ENCODE measurements at regions of chr6 and their contacts with region 1.

Region 1: GRCh38 chr6:157981395-157982296 is at the start of gene SYNJ2:
- DNase-seq: peak; percentile 89
- H3K4me3 Mint-ChIP-seq: peak within 1 kb of the TSS; percentile 89
- H3K27ac Mint-ChIP-seq: peak within 1 kb of the TSS; percentile 74
- H3K4me1 Mint-ChIP-seq: peaks cover 36% of the 10 kb centered on the region
- H3K27me3 Mint-ChIP-seq: no peaks in the 10 kb centered on the region
- total RNA-seq, gene SYNJ2: 32.2 to 32.3 TPM

Region 2: GRCh38 chr6:157823001-157823527 is 158.6 kb before region 1 on chr6 and contains the start of gene SNX9:
- CTCF ChIA-PET with region 1: no interaction called
- POLR2A ChIA-PET with region 1: no interaction called
- intact Hi-C with region 1: loop called (anchors 5 kb)
- DNase-seq: peak; percentile 81
- H3K4me3 Mint-ChIP-seq: peak within 1 kb of the TSS; percentile 96
- H3K27ac Mint-ChIP-seq: peak within 1 kb of the TSS; percentile 99
- H3K4me1 Mint-ChIP-seq: peaks cover 38% of the 10 kb centered on the region
- H3K27me3 Mint-ChIP-seq: no peaks in the 10 kb centered on the region
- total RNA-seq, gene SNX9: 59.3 to 59.7 TPM

Region 3: GRCh38 chr6:157885211-157885788 is 96.3 kb before region 1 on chr6:
- CTCF ChIA-PET with region 1: no interaction called
- POLR2A ChIA-PET with region 1: no interaction called
- intact Hi-C with region 1: loop called (anchors 5 kb)
- DNase-seq: peak; percentile 75
- H3K4me3 Mint-ChIP-seq: no peak overlapping the region
- H3K27ac Mint-ChIP-seq: peak overlapping the region; percentile 94
- H3K4me1 Mint-ChIP-seq: peaks cover 68% of the 10 kb centered on the region
- H3K27me3 Mint-ChIP-seq: no peaks in the 10 kb centered on the region

Region 4: GRCh38 chr6:157962601-157963302 is 18.9 kb before region 1 on chr6:
- CTCF ChIA-PET with region 1: no interaction called
- POLR2A ChIA-PET with region 1: interaction called, 3 read pairs
- intact Hi-C with region 1: loop called (anchors 1 kb)
- DNase-seq: peak; percentile 51
- H3K4me3 Mint-ChIP-seq: peak overlapping the region; percentile 46
- H3K27ac Mint-ChIP-seq: peak overlapping the region; percentile 74
- H3K4me1 Mint-ChIP-seq: peaks cover 18% of the 10 kb centered on the region
- H3K27me3 Mint-ChIP-seq: no peaks in the 10 kb centered on the region

Region 5: DNA sequence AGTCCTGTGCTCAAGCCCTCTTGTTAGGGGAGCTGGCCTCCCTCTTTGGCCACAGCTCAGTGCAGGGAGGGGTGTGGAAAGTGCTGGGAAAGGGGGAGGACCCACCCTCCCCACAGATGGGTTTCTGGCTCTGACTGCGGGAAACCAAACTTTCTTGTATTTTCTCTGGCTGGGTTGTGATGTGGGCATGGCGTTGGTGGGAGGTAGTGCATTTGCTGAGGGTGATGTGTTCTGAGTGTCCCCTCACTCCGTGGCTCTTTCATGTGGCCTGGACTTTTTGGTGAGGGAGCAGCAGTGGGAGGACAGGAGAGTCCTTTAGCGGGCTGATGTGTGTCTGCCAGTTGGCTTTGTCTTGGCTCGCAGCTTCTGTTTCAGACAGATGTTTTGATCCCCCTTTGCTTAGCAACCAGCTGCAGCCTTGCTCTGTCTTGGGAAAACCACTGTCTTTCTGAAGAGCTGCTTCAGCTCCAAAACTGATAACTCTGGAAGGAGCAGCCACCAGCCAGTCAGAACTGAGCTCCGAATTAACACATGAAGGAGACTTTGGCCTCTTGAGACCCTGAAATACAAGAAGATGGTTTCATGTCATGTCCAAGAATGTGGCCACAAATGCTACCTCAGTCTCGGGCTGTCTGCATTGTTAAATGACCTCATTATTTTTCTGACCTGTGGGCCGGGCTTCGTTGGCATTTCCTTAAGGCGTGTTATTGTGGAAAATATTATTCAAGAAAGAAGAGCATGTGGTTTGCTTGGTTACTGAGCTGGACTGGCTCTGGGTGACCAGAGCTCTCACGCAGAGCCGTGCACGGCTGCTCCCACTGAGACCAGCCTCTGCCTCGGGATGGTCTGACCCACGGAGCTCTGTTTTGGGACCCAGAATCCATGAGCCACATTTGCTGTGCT is 21.6 kb after region 1 on chr6:
- CTCF ChIA-PET with region 1: interaction called, 3 read pairs
- POLR2A ChIA-PET with region 1: no interaction called
- intact Hi-C with region 1: loop called (anchors 2 kb)
- DNase-seq: peak; percentile 80
- H3K4me3 Mint-ChIP-seq: no peak overlapping the region
- H3K27ac Mint-ChIP-seq: peak overlapping the region; percentile 44
- H3K4me1 Mint-ChIP-seq: peaks cover 44% of the 10 kb centered on the region
- H3K27me3 Mint-ChIP-seq: no peaks in the 10 kb centered on the region

Region 6: GRCh38 chr6:158040051-158040803 is 58.6 kb after region 1 on chr6:
- CTCF ChIA-PET with region 1: no interaction called
- POLR2A ChIA-PET with region 1: no interaction called
- intact Hi-C with region 1: no loop called
- DNase-seq: peak; percentile 54
- H3K4me3 Mint-ChIP-seq: no peak overlapping the region
- H3K27ac Mint-ChIP-seq: peak overlapping the region; percentile 44
- H3K4me1 Mint-ChIP-seq: peaks cover 25% of the 10 kb centered on the region
- H3K27me3 Mint-ChIP-seq: no peaks in the 10 kb centered on the region

Region 7: DNA sequence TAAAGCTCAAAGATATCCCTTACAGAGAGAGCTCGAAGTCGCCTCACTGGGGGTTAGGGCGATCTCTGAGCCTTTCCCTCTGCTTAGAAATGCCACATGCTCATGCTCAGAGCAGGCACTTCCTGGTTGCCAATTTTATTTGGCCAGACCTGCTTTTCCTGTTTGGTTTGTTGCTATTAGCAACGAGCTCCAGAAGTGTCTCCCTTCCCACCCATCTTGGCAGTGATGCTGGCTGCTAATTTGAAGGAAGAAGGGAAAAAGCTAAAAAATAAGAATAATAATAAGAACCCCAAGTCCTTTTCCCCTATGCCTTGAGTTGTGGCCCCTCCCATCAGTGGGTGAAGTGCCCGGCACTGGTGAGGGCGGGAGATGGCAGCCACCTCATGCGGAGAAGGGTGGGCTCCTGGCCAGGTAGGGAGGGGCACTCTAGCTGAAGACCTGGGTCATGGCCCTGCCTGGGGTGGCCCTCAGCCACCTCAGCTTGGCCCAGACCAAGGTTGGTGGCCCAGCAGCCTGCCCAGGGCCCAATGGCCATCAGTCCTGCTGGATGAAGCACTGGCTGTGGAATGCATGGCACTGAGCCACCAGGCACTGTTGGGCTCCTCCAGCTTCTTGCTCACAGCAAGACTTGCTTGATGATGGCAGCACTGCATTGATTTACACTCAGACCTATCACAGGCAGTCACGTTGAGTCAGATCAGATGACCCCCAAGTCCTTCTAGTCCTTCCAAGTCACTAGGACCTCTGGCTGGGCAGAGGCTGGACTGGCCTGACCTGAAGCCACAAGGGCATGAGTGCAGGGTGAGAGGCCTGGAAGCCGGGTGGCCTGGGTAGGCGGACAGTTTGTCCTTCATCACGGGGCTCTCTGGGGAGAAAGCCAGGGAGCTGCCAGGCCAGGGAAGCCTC is 79.1 kb after region 1 on chr6:
- CTCF ChIA-PET with region 1: no interaction called
- POLR2A ChIA-PET with region 1: no interaction called
- intact Hi-C with region 1: loop called (anchors 5 kb)
- DNase-seq: no peak
- H3K4me3 Mint-ChIP-seq: no peak overlapping the region
- H3K27ac Mint-ChIP-seq: no peak overlapping the region
- H3K4me1 Mint-ChIP-seq: peaks cover 31% of the 10 kb centered on the region
- H3K27me3 Mint-ChIP-seq: no peaks in the 10 kb centered on the region

Region 8: GRCh38 chr6:158072083-158072721 is 90.6 kb after region 1 on chr6:
- CTCF ChIA-PET with region 1: interaction called, 23 read pairs
- POLR2A ChIA-PET with region 1: no interaction called
- intact Hi-C with region 1: loop called (anchors 1 kb)
- DNase-seq: peak; percentile 80
- H3K4me3 Mint-ChIP-seq: no peak overlapping the region
- H3K27ac Mint-ChIP-seq: peak overlapping the region; percentile 64
- H3K4me1 Mint-ChIP-seq: peaks cover 23% of the 10 kb centered on the region
- H3K27me3 Mint-ChIP-seq: no peaks in the 10 kb centered on the region

Measured in activated CD4-positive, alpha-beta memory T cell treated with anti-CD3 and anti-CD28 coated beads for 36 hours (primary cell).